Endothelial cell of umbilical vein (primary cell): ENCODE measurements at regions of chr7 and their contacts with region 1.

Region 1: GRCh38 chr7:11079907-11080306 is 106.2 kb downstream of the PHF14 start:
- DNase-seq: no peak
- H3K4me3 ChIP-seq: no peak overlapping the region
- H3K27ac ChIP-seq: no peak overlapping the region
- H3K4me1 ChIP-seq: no peaks in the 10 kb centered on the region
- H3K27me3 ChIP-seq: no peaks in the 10 kb centered on the region
- CTCF ChIP-seq: no peak
- POLR2A ChIP-seq: no peak

Region 2: DNA sequence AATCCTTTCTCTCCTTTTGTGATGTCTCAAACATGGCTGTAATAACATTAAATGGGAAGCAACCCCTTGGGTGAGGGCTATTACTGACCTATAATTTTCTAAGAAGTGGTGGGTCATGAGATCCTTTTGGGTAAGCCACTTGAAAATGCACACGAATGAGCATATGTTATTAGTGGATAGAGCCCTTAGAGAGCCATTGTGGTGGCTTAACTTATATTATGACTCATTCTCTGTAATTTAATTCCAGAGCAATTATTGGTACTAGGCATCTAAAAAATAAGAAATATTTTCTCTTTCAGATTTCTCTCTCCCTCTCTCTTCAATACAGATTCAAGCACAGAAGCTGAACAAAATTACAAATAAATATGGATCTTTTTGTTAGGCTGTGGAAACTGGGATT is 1283.7 kb before region 1 on chr7:
- CTCF ChIA-PET with region 1: no interaction called
- POLR2A ChIA-PET with region 1: no interaction called
- dilution Hi-C with region 1: no loop called
- intact Hi-C with region 1: no loop called
- DNase-seq: no peak
- H3K4me3 ChIP-seq: no peak overlapping the region
- H3K27ac ChIP-seq: no peak overlapping the region
- H3K4me1 ChIP-seq: no peaks in the 10 kb centered on the region
- H3K27me3 ChIP-seq: no peaks in the 10 kb centered on the region
- CTCF ChIP-seq: no peak
- POLR2A ChIP-seq: no peak

Region 3: GRCh38 chr7:11127114-11127835 is 47.4 kb after region 1 on chr7:
- CTCF ChIA-PET with region 1: interaction called, 3 read pairs
- POLR2A ChIA-PET with region 1: no interaction called
- dilution Hi-C with region 1: no loop called
- intact Hi-C with region 1: loop called (anchors 2 kb)
- DNase-seq: no peak
- H3K4me3 ChIP-seq: no peak overlapping the region
- H3K27ac ChIP-seq: no peak overlapping the region
- H3K4me1 ChIP-seq: peaks cover 5% of the 10 kb centered on the region
- H3K27me3 ChIP-seq: no peaks in the 10 kb centered on the region
- CTCF ChIP-seq: no peak
- POLR2A ChIP-seq: no peak